ENCODE measurements at regions of chr10 and their contacts with region 1.

Region 1: GRCh38 chr10:103069453-103070331 is 123.4 kb downstream of the NT5C2 start:
- DNase-seq: peak; percentile 28 to 90
- H3K4me3 ChIP-seq: no peak overlapping the region
- CTCF ChIP-seq: no peak
- POLR2A ChIP-seq: no peak

Region 2: DNA sequence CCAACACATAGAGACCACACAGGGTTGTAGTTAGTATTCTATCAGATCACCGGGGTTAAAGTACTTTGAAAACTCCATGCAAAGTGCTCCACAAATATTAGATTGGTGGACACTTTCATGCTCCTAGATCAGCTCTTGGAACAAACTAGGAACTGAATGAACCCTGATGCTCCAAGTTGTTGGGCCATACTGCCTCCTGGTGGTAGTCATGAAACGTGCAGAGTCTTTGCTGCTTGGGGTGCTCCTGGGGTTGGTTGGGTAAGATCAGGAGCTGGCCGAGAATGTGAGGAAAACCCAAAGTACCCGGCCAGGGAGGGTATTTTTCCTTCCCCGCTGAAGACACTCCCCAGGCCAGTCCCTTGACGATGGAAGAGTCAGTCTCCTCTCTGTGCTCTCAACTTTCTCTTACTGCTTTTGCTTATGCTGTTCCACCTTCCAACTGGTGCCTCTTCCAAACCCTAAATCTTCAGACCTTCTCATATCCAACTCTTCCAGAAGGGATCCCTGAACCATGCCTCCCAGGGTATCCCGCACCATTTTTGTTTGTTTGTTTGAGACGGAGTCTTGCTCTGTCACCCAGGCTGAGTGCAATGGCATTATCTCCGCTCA is 175.1 kb after region 1 on chr10:
- intact Hi-C with region 1: loop called (anchors 5 kb)
- DNase-seq: peak; percentile 74 to 94
- H3K4me3 ChIP-seq: no peak overlapping the region
- CTCF ChIP-seq: peak in 1 of 3 donors; percentile 25
- POLR2A ChIP-seq: no peak

Region 3: GRCh38 chr10:103367782-103368518 is 298.3 kb after region 1 on chr10 and contains the start of gene TAF5:
- intact Hi-C with region 1: no loop called
- DNase-seq: peak; percentile 94 to 97
- H3K4me3 ChIP-seq: peak within 1 kb of the TSS; percentile 78
- CTCF ChIP-seq: no peak
- POLR2A ChIP-seq: peak in 1 of 2 donors; percentile 18
- total RNA-seq, gene TAF5: 4.1 to 8.9 (median 6.1) TPM

Region 4: DNA sequence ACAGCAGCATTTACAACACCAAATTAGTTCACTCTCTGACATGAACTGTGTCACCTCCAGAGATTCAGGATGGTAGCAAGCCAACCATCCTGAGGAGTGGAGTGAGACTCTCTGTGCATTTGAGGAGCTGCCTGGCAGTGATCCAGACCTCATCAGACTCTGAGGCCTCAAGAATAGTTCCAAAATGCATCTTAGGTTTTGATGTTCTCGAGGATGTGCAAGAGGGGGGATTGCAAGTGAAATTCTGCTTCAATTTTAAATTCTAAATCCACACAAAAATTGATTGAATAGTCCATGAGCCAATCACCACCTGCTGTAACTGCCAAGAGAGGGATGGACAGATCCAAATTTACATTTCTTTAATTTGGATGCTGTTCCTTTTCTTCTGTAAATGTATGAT is 947.0 kb after region 1 on chr10:
- intact Hi-C with region 1: no loop called
- DNase-seq: no peak
- H3K4me3 ChIP-seq: no peak overlapping the region
- CTCF ChIP-seq: no peak
- POLR2A ChIP-seq: no peak